Left ventricle myocardium superior (tissue), 1 donor: ENCODE measurements at regions of chr2 and their contacts with region 1.

Region 1: DNA sequence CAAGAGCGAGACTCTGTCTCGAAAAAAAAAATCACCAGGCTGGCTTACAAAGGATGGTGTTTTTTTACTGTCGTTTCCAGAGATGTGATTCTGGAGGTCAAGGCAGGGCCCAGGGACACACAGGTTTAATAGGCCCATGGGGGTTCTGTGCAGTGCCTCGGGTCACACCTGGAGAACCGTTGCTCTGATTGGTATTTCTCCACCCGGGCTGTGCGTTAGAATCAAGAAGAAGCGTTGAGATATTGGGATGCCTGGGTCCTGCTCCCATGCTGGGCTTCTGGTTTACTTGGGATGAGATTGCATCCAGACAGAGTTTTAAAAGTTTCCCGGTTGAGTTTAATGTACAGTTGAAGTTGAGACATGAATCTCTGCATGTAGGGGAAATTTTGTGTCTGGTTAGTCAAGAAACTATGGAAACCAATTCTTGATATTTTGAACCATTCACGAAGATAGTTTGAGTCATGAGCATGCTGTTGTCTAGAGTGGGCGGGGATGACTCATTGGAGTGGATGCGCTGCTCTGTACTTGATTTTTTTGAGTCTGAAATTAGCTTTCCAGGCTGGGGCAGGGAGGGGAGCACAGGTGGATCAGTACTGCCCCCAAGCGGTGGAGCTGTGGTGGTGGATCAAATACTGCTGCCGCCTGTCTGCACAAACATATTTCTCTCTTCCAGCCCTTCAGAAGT is 50.1 kb downstream of the GREB1 start:
- DNase-seq: peak; percentile 64
- ATAC-seq: peak; percentile 79

Region 2: GRCh38 chr2:11477994-11478393 is 106.0 kb before region 1 on chr2:
- intact Hi-C with region 1: loop called (anchors 5 kb)
- DNase-seq: peak; percentile 90
- ATAC-seq: peak; percentile 71